PC-3 (cell line): ENCODE measurements at regions of chr21 and their contacts with region 1.

Region 1: GRCh38 chr21:42467140-42467983 is 28.7 kb downstream of the RSPH1 start:
- DNase-seq: peak; percentile 50
- ATAC-seq: peak; percentile 34
- H3K4me3 ChIP-seq: no peak overlapping the region
- H3K27ac ChIP-seq: peak overlapping the region; percentile 83
- H3K4me1 ChIP-seq: peaks cover 21% of the 10 kb centered on the region
- H3K27me3 ChIP-seq: no peaks in the 10 kb centered on the region
- CTCF ChIP-seq: peak; percentile 62

Region 2: DNA sequence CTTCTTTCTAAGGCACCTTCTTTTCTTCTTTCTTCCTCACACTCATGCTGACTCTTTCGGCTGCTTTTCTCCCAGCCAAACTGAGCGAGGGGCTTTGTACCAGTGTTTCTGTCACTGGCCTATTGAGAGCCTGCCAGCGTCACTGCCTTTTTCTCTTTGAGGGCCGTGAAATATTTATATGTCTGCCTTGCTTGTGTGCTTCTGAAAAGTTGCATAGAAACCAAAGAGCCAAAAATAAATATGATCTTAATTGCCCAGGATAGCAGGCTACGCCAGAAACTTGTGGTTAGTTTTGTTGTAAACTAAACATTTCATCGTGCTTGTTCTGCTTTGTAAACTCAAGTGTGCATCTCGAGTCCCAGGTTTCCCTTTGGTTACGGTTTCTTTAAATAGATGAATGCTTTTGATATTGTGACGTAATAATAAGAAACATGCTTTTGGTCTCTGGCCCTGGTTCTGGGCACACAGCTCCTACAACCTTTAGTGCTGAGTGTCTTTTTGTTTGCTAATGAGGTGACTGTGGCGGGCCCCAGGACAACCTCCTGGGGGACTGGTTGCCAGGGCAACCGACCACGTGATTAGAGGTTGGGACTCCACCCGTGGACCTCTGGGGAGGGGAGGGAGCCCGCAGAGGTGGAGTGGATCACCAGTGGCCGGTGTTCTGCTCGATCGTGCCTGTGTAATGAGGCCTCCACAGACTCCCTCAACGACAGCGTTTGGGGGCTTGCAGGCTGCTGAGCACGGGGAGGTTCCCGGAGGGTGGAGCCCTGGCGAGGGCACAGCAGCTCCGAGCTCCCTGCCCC is 57.2 kb after region 1 on chr21:
- CTCF ChIA-PET with region 1: no interaction called
- POLR2A ChIA-PET with region 1: no interaction called
- intact Hi-C with region 1: no loop called
- DNase-seq: peak; percentile 22
- ATAC-seq: peak; percentile 65
- H3K4me3 ChIP-seq: no peak overlapping the region
- H3K27ac ChIP-seq: peak overlapping the region; percentile 55
- H3K4me1 ChIP-seq: peaks cover 20% of the 10 kb centered on the region
- H3K27me3 ChIP-seq: no peaks in the 10 kb centered on the region
- CTCF ChIP-seq: no peak

Region 3: GRCh38 chr21:42537106-42537742 is 69.9 kb after region 1 on chr21:
- CTCF ChIA-PET with region 1: interaction called, 5 read pairs
- POLR2A ChIA-PET with region 1: interaction called, 7 read pairs
- intact Hi-C with region 1: loop called (anchors 2 kb)
- DNase-seq: peak; percentile 22
- ATAC-seq: peak; percentile 68
- H3K4me3 ChIP-seq: no peak overlapping the region
- H3K27ac ChIP-seq: no peak overlapping the region
- H3K4me1 ChIP-seq: no peaks in the 10 kb centered on the region
- H3K27me3 ChIP-seq: no peaks in the 10 kb centered on the region
- CTCF ChIP-seq: peak; percentile 54